OCI-LY7 (cell line): ENCODE measurements at regions of chrX and their contacts with region 1.

Region 1: GRCh38 chrX:140817942-140818341 is 108.4 kb downstream of the LINC00632 start:
- DNase-seq: peak; percentile 58
- H3K4me3 ChIP-seq: peak overlapping the region; percentile 63
- H3K27ac ChIP-seq: no peak overlapping the region
- H3K4me1 ChIP-seq: peaks cover 25% of the 10 kb centered on the region
- CTCF ChIP-seq: peak; percentile 77

Region 2: GRCh38 chrX:140918407-140919038 is 100.6 kb after region 1 on chrX:
- CTCF ChIA-PET with region 1: no interaction called
- POLR2A ChIA-PET with region 1: no interaction called
- intact Hi-C with region 1: loop called (anchors 5 kb)
- DNase-seq: peak; percentile 71
- H3K4me3 ChIP-seq: no peak overlapping the region
- H3K27ac ChIP-seq: no peak overlapping the region
- H3K4me1 ChIP-seq: no peaks in the 10 kb centered on the region
- CTCF ChIP-seq: peak; percentile 87

Region 3: DNA sequence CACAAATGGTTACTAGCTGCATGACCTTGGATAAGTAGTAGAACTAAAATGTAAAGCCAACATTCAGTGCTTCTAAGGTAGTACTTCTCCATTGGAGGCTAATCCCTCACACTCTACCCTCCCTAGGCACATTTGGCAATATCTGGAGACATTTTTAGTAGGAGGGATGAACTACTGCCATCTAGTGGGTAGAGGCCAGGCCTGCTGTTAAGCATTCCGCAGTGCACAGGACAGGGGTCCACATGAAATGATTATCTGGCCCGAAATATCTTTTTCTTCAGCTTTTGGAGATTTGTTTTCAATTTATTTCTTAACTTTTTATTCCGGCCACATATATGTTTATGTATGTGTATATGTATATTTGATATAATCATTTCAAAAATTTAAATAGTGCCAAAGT is 460.4 kb after region 1 on chrX:
- CTCF ChIA-PET with region 1: no interaction called
- POLR2A ChIA-PET with region 1: no interaction called
- intact Hi-C with region 1: loop called (anchors 2 kb)
- DNase-seq: peak; percentile 22
- H3K4me3 ChIP-seq: no peak overlapping the region
- H3K27ac ChIP-seq: no peak overlapping the region
- H3K4me1 ChIP-seq: no peaks in the 10 kb centered on the region
- CTCF ChIP-seq: peak; percentile 73